Naive thymus-derived CD4-positive, alpha-beta T cell (primary cell): ENCODE measurements at regions of chr17 and their contacts with region 1.

Region 1: DNA sequence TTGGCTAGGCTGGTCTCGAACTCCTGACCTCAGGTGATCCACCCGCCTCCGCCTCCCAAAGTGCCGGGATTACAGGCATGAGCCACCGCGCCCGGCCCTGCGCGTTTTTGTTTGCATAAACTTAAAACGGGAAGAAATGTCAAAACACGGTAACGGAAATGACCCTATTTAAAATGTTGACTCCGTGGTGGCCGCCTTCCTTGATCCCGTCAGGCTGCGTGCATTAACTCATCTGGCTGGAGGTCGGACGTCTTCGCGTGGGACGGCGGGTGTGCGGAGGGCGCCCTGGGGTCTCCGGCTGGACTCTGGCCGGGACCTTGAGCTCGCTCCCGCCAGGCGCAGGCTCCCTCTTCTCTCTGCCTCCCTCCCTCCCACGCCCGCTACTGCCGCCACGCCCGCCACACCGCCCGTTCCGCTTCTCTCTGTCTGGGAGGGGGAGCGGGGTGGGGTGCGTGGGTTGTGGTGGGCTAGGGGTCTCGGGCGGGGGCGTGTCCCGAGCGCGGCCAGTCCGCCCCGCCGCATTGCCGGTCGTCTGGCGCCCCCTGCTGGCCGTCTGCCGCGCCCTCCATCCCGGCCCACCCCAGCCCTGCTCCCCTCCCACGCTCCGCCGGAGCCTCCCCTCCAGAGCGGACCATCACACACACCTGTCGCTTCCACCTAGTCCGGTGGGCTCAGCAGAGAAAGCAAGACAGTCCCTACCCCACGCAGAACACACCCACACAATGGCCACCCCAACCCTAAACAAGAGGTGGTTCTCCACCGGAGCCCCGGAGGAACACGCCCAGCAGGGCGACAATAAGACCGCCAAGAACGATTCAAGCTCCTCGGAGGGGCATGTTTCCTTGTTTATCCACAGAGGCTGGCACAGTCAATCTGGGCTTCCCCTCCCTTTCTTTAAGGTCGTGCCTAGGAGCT is 1.2 kb upstream of the CCDC42 start:
- DNase-seq: peak; percentile 47 to 84 (median 70)
- ATAC-seq: peak; percentile 88
- H3K4me3 ChIP-seq: peak overlapping the region; percentile 80
- H3K4me3 Mint-ChIP-seq: peak overlapping the region; percentile 85 to 94 (median 91)
- H3K27ac ChIP-seq: peak overlapping the region; percentile 67
- H3K27ac Mint-ChIP-seq: peak overlapping the region; percentile 84 to 95 (median 88)
- H3K4me1 ChIP-seq: peaks cover 3 to 21% of the 10 kb centered on the region in 2 donors
- H3K4me1 Mint-ChIP-seq: peaks cover 2 to 34% (median 25%) of the 10 kb centered on the region in 7 donors
- H3K27me3 ChIP-seq: no peaks in the 10 kb centered on the region
- H3K27me3 Mint-ChIP-seq: peaks cover 0 to 21% (median 0%) of the 10 kb centered on the region in 5 donors

Region 2: DNA sequence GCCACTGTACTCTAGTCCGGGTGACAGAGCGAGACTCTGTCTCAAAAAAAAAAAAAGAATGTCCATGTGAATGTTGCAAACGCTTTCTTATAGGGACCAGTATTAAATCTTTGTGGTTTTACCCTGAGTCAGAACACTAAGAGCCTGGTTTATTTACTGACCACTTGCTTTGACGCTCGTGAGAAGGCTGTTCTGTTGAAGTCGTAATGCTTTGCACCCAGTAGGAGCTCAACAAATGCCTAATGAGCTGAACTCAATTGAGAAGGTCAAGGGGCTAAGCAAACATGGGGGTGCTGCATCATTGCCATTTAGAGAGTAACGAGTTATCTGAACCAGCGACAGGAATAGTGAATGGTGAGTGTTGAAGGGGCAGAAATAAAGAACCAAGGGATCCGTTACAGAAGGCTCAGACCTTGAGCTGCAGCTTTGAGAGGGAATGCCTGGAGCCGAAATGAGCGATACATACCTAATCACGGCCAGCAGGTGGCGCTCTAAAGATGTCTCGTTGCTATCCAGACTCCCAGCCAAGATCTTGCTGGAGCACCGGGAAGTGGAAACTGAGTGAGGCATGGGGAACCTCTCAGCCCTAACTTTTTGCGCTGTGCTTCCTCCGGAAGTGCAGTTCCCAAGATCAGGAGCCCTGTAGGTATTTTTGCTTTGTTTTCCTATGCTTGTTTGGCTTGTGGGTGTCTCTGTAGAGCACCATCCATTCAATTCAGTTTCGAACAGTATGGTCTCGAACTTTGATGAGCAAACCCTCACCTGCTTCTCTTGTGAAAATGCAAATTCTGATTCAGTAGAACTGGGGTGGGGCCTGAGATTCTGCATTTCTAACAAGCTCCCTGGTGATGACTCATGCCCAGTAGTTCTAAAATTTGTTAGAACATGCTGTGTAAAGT is 335.6 kb before region 1 on chr17:
- CTCF ChIA-PET with region 1: interaction called, 19 read pairs
- POLR2A ChIA-PET with region 1: interaction called, 7 read pairs
- intact Hi-C with region 1: loop called (anchors 1 kb)
- DNase-seq: peak; percentile 56 to 81 (median 70)
- ATAC-seq: peak; percentile 84
- H3K4me3 ChIP-seq: no peak overlapping the region
- H3K4me3 Mint-ChIP-seq: peak overlapping the region in 1 of 10 donors; percentile 48
- H3K27ac ChIP-seq: no peak overlapping the region
- H3K27ac Mint-ChIP-seq: no peak overlapping the region
- H3K4me1 ChIP-seq: peaks cover 0 to 3% of the 10 kb centered on the region in 2 donors
- H3K4me1 Mint-ChIP-seq: peaks cover 9 to 26% (median 15%) of the 10 kb centered on the region in 7 donors
- H3K27me3 ChIP-seq: no peaks in the 10 kb centered on the region
- H3K27me3 Mint-ChIP-seq: peaks cover 0 to 37% (median 8%) of the 10 kb centered on the region in 5 donors

Region 3: GRCh38 chr17:8572764-8573163 is 173.1 kb before region 1 on chr17:
- CTCF ChIA-PET with region 1: no interaction called
- POLR2A ChIA-PET with region 1: no interaction called
- intact Hi-C with region 1: loop called (anchors 1 to 5 kb)
- DNase-seq: peak in 2 of 9 donors; percentile 1 to 2
- ATAC-seq: no peak
- H3K4me3 ChIP-seq: no peak overlapping the region
- H3K4me3 Mint-ChIP-seq: no peak overlapping the region
- H3K27ac ChIP-seq: no peak overlapping the region
- H3K27ac Mint-ChIP-seq: no peak overlapping the region
- H3K4me1 ChIP-seq: no peaks in the 10 kb centered on the region
- H3K4me1 Mint-ChIP-seq: no peaks in the 10 kb centered on the region
- H3K27me3 ChIP-seq: no peaks in the 10 kb centered on the region
- H3K27me3 Mint-ChIP-seq: peaks cover 0 to 12% (median 0%) of the 10 kb centered on the region in 5 donors

Region 4: DNA sequence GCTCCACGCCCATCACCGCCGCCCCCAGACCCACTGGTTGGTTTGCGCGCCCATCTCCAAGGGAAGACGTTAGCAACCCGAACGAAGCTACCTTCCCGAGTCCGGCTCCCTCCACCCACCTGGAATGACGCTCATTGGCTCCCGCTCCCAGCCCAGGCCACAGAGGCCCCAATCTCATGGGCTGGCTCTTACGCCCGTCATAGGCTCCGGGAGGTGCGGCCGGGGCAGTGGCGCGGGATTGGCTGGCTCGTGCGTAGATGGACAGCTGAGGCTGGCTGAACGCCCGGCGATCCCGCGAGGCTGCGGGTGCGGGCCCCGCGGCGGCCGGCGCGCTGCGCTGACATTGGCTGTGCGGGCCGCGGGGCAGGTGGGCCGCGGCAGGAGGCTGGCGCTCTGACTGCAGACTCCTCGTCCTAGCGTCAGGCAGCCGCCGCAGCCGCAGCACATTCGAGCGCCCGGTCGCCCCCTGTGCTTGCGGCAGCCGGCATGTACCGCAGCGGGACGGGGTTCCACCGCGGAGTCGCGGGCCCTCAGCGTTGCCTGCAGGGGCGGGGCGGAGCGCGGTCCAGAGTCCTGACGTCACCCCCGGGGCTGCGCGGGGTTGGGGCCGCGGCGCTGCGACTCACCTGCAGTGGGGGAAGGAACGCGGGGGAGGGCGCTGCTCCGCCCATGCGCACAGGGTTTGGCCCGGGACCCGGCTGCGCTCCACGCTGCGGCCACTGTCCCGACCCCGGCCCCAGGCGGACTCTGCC is 114.9 kb before region 1 on chr17:
- CTCF ChIA-PET with region 1: no interaction called
- POLR2A ChIA-PET with region 1: no interaction called
- intact Hi-C with region 1: loop called (anchors 2 kb)
- DNase-seq: peak; percentile 63 to 91 (median 82)
- ATAC-seq: peak; percentile 97
- H3K4me3 ChIP-seq: peak overlapping the region; percentile 64
- H3K4me3 Mint-ChIP-seq: peak overlapping the region; percentile 91 to 100 (median 99)
- H3K27ac ChIP-seq: peak overlapping the region; percentile 66
- H3K27ac Mint-ChIP-seq: peak overlapping the region in 7 of 9 donors; percentile 35 to 95 (median 80)
- H3K4me1 ChIP-seq: peaks cover 5% of the 10 kb centered on the region in 2 donors
- H3K4me1 Mint-ChIP-seq: peaks cover 0 to 18% (median 13%) of the 10 kb centered on the region in 7 donors
- H3K27me3 ChIP-seq: peaks cover 3 to 4% of the 10 kb centered on the region in 2 donors
- H3K27me3 Mint-ChIP-seq: peaks cover 30 to 67% (median 51%) of the 10 kb centered on the region in 5 donors